Pancreas (tissue), 10 donors: ENCODE measurements at regions of chr11 and their contacts with region 1.

Region 1: DNA sequence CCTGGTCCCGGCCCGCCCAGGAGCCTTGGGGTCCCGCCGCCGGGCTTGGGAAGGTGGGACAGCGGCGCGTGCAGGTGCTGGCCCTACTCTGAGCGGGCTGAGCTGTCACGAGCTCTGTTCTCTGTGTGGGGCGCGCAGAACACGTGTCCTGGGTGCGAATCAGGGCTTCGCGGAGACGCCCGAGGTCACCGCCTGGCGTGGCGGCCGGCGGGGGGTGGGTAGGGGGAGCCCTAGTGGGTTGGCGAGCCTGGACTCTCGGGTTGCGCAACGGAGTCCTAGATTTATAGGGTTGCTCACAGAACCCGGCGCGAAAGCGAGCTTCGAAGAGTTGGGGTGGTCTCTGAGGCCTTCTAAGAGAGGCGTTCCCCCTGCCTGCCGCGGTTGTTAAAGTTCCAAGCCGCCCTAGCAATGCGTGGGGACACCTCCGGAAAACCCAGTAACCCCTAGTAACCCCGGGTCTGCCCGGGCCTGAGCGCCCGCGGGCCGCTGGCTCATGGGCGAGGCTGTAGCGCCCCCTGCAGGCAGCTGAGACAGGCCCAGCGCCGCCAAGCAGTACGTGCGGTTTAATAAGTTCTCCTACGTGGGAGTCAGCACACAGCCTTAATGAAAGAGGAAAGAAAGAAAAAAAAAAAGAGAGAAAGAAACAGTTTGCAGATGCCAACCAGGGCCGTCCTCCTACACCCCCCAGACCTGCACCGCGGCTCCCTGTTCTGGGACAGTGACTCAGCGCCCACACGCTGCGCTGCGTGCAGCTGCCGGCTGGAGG is 2.8 kb downstream of the ADM start:
- DNase-seq: peak; percentile 74 to 91 (median 82)
- ATAC-seq: peak; percentile 52 to 69 (median 60)
- H3K4me3 ChIP-seq: peak overlapping the region in 3 of 4 donors; percentile 23 to 84 (median 53)
- H3K27ac ChIP-seq: peak overlapping the region in 3 of 4 donors; percentile 18 to 75 (median 56)
- H3K4me1 ChIP-seq: peaks cover 9 to 41% (median 21%) of the 10 kb centered on the region in 3 donors
- H3K27me3 ChIP-seq: no peaks in the 10 kb centered on the region
- CTCF ChIP-seq: peak; percentile 91 to 97 (median 96)

Region 2: DNA sequence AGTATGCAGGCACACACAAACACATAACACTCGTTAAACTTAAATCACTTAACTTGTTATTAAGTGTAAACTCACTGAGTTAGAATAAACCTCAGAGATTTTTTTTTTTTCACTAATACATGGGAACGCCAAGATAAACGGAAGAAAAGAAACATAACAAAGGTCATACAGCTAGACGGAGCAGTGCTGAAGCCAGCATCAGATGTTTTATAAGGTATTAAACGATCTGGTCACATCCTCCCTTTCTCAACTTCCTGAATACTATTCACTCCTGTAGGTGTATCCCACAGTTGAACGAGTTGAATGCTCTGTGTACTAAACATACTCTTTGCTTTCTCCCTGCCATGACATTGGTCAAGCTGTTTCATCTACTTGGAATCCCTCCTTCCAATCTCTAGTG is 431.8 kb before region 1 on chr11:
- intact Hi-C with region 1: no loop called
- DNase-seq: no peak
- ATAC-seq: no peak
- H3K4me3 ChIP-seq: no peak overlapping the region
- H3K27ac ChIP-seq: no peak overlapping the region
- H3K4me1 ChIP-seq: no peaks in the 10 kb centered on the region
- H3K27me3 ChIP-seq: no peaks in the 10 kb centered on the region
- CTCF ChIP-seq: no peak

Region 3: GRCh38 chr11:10208131-10208575 is 99.5 kb before region 1 on chr11:
- intact Hi-C with region 1: loop called in 2 of 3 experiments (anchors 5 kb)
- DNase-seq: no peak
- ATAC-seq: peak; percentile 55 to 91 (median 86)
- H3K4me3 ChIP-seq: no peak overlapping the region
- H3K27ac ChIP-seq: no peak overlapping the region
- H3K4me1 ChIP-seq: no peaks in the 10 kb centered on the region
- H3K27me3 ChIP-seq: no peaks in the 10 kb centered on the region
- CTCF ChIP-seq: peak; percentile 51 to 68 (median 60)